ENCODE measurements at regions of chr6 and their contacts with region 1.

Region 1: DNA sequence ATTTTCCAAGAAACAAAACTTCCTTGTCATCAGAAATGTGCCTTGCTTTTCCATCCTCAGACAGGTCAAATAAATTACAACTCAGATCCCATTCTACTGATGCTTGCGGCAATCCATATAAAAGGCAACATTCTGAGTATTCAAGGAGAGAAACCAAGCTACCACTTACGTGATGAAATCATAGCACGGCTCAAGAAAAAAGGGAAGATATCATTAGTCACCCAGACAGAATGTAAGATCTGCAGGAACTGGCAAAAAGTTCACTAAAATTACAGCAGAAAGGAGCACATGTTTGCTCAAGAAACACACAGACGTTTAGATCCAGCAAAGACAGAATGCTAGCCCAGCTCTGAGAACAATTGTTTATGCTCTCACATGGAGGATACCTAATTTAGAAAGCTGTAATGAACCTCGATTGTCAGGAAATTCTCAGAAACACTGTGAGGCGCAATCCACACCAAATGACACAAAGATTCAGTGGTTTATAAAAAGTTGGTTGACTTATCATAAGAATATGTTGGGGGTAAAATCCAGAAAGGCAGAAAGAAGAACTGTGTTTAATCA is 304.2 kb downstream of the ADGRG6 start:
- DNase-seq: no peak
- ATAC-seq: no peak
- H3K4me3 ChIP-seq: no peak overlapping the region
- H3K4me3 Mint-ChIP-seq: peak overlapping the region in 1 of 3 donors; percentile 4
- H3K27ac ChIP-seq: no peak overlapping the region
- H3K27ac Mint-ChIP-seq: no peak overlapping the region
- H3K4me1 ChIP-seq: peaks cover 0 to 18% of the 10 kb centered on the region in 2 experiments
- H3K4me1 Mint-ChIP-seq: peaks cover 7 to 14% (median 11%) of the 10 kb centered on the region in 3 donors
- H3K27me3 ChIP-seq: no peaks in the 10 kb centered on the region
- H3K27me3 Mint-ChIP-seq: peaks cover 4 to 5% of the 10 kb centered on the region in 2 donors

Region 2: DNA sequence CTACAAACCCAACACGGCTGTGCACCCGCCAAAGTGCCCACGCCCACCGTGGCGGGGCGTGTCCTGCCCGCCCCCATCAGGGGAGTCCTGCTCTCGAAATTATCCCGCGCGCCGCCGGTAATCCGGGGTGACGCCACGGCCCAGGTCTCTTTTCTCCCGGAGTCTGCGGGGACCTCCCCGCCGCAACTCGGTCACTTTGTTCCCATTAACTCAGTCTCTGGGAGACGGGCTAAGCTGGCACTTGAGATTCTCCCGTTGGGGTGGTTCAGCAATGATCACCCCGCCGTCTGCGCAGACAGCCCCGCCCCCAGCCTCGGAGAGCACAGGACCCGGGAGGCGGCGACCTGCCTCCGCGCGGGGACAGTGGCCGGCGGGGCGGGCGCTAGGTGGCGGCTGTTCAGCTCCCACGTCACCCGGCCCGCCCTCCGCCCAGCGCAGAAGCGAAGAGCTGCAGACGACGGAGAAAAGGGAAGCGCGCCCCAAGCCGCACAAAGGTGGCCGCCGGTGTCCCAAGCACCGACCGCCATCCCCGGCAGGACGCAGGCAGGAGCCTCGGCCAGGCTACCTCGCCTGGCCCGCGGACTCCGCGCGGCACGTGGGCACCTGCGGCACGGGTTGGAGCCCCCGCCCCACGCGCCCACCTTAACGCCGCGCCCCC is 1457.9 kb after region 1 on chr6:
- CTCF ChIA-PET with region 1: no interaction called
- POLR2A ChIA-PET with region 1: interaction called in 1 of 2 experiments, 12 read pairs
- DNase-seq: peak; percentile 81 to 94 (median 89)
- ATAC-seq: peak; percentile 91 to 96 (median 96)
- H3K4me3 ChIP-seq: peak overlapping the region; percentile 78 to 88
- H3K4me3 Mint-ChIP-seq: peak overlapping the region; percentile 89 to 93 (median 90)
- H3K27ac ChIP-seq: peak overlapping the region; percentile 86
- H3K27ac Mint-ChIP-seq: peak overlapping the region; percentile 45 to 94
- H3K4me1 ChIP-seq: peaks cover 11 to 16% of the 10 kb centered on the region in 2 experiments
- H3K4me1 Mint-ChIP-seq: peaks cover 35 to 38% (median 36%) of the 10 kb centered on the region in 3 donors
- H3K27me3 ChIP-seq: no peaks in the 10 kb centered on the region
- H3K27me3 Mint-ChIP-seq: no peaks in the 10 kb centered on the region

Measured in T-cell (primary cell).